HCT116 (cell line): ENCODE measurements at regions of chr7 and their contacts with region 1.

Region 1: DNA sequence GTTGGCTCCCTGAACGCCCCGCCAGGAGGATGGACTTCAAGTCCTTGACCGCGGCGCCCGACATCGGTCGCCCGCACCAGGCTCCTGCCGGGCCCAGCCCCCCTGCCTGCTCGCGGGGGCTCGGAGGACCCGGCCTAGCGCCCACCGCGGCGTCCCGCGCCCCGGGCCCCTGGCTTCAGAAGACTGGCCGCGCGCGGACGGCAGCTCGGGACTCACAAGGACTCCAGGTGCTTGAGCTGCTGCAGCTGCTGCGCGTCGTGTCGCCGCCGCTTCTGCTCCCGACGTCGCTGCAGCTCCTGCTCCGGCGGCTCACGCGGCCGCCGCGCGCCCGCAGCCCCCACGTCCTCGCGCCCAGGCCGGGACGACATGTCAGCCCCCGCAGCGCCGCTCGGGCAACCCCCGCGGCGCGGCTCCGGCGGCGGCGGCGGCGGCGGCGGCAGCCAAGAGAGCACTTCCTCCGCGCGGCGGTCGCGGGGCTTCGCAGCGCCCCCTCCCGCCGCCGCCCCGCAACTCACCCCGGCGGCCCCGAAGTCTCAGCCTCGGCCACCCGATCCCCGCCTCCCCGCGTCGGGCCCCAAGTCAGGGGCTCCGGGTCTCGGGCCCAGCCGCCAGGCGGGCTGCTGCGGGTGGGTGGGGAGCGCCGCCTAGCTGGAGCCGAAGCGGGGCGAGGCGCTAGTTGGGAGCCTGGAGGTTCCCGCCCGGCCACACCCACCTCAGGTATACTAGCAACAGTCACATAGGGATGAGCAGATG is at the start of gene RP9:
- DNase-seq: peak; percentile 57
- ATAC-seq: peak; percentile 87
- H3K4me3 ChIP-seq: peak within 1 kb of the TSS; percentile 79 to 90
- H3K27ac ChIP-seq: peak within 1 kb of the TSS; percentile 91
- H3K4me1 ChIP-seq: peaks cover 4 to 24% of the 10 kb centered on the region in 2 experiments; a peak in 3 of 4 replicates
- H3K27me3 ChIP-seq: no peaks in the 10 kb centered on the region
- CTCF ChIP-seq: peak in 2 of 3 experiments; percentile 39 to 43; a peak in 5 of 6 replicates
- POLR2A ChIP-seq: peak; percentile 59
- RAD21 ChIP-seq: peak; percentile 57
- total RNA-seq, gene RP9: 14.2 TPM

Region 2: DNA sequence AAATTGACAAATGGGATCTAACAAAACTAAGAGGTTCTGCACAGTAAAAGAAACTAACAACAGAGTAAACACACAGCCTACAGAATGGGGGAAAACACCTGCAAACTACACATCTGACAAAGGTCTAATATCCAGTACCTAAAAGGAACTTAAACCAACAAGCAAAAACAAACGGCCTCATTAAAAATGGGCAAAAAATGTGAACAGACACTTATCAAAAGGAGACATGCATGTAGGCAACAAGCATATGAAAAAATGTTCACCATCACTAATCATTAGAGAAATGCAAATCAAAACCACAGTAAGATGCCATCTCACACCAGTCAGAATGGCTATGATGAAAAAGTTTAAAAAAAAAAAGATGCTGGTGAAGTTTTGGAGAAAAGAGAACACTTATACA is 415.0 kb before region 1 on chr7:
- CTCF ChIA-PET with region 1: interaction called, 4 read pairs
- POLR2A ChIA-PET with region 1: no interaction called
- RAD21 ChIA-PET with region 1: no interaction called
- intact Hi-C with region 1: loop called (anchors 5 kb)
- DNase-seq: no peak
- ATAC-seq: no peak
- H3K4me3 ChIP-seq: no peak overlapping the region
- H3K27ac ChIP-seq: no peak overlapping the region
- H3K4me1 ChIP-seq: peaks cover 0 to 8% of the 10 kb centered on the region in 2 experiments; a peak in 1 of 4 replicates
- H3K27me3 ChIP-seq: no peaks in the 10 kb centered on the region
- CTCF ChIP-seq: no peak
- POLR2A ChIP-seq: no peak
- RAD21 ChIP-seq: no peak

Region 3: DNA sequence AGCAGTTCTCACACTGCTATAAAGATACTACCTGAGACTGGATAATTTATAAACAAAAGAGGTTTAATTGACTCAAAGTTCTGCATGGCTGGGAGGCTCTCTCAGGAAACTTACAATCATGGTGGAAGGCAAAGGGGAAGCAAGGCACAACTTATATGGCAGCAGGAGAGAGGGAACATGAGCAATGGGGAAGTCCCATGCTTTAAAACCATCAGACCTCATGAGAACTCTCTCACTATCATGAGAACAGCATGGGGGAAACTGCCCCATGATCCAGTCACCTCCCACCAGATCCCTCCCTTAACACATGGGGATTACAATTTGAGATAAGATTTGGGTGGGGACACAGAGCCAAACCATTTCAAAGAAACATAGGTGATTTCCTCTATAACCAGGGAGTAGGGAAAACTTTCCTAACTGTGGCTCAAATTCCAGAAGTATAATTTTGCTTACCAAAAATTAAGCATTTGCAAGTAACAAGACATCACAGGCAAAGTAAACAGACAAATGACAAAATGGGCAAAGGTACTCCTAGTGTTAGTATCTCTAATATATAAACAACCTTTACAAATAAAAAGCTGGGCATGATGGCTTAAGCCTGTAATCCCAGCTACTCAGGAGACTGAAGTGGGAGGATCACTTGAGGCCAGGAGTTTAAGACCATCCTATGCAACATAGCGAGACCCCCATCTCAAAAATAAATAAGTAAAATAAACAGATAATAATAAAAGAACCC is 305.6 kb before region 1 on chr7:
- CTCF ChIA-PET with region 1: interaction called, 9 read pairs
- POLR2A ChIA-PET with region 1: no interaction called
- RAD21 ChIA-PET with region 1: no interaction called
- intact Hi-C with region 1: loop called (anchors 1 kb)
- DNase-seq: no peak
- ATAC-seq: no peak
- H3K4me3 ChIP-seq: no peak overlapping the region
- H3K27ac ChIP-seq: no peak overlapping the region
- H3K4me1 ChIP-seq: no peaks in the 10 kb centered on the region
- H3K27me3 ChIP-seq: no peaks in the 10 kb centered on the region
- CTCF ChIP-seq: no peak
- POLR2A ChIP-seq: no peak
- RAD21 ChIP-seq: no peak

Region 4: GRCh38 chr7:32891800-32892520 is 217.2 kb before region 1 on chr7:
- CTCF ChIA-PET with region 1: no interaction called
- POLR2A ChIA-PET with region 1: no interaction called
- RAD21 ChIA-PET with region 1: no interaction called
- intact Hi-C with region 1: loop called (anchors 5 kb)
- DNase-seq: peak; percentile 84
- ATAC-seq: peak; percentile 71
- H3K4me3 ChIP-seq: peak overlapping the region; percentile 69 to 88
- H3K27ac ChIP-seq: peak overlapping the region; percentile 89
- H3K4me1 ChIP-seq: peaks cover 16 to 28% of the 10 kb centered on the region in 2 experiments; a peak in 3 of 4 replicates
- H3K27me3 ChIP-seq: no peaks in the 10 kb centered on the region
- CTCF ChIP-seq: no peak
- POLR2A ChIP-seq: peak; percentile 10
- RAD21 ChIP-seq: no peak

Region 5: GRCh38 chr7:33062782-33063443 is 46.3 kb before region 1 on chr7:
- CTCF ChIA-PET with region 1: interaction called, 4 read pairs
- POLR2A ChIA-PET with region 1: no interaction called
- RAD21 ChIA-PET with region 1: no interaction called
- intact Hi-C with region 1: loop called (anchors 5 kb)
- DNase-seq: peak; percentile 93
- ATAC-seq: peak; percentile 95
- H3K4me3 ChIP-seq: peak overlapping the region; percentile 75 to 86
- H3K27ac ChIP-seq: peak overlapping the region; percentile 74
- H3K4me1 ChIP-seq: peaks cover 7 to 17% of the 10 kb centered on the region in 2 experiments; a peak in 3 of 4 replicates
- H3K27me3 ChIP-seq: no peaks in the 10 kb centered on the region
- CTCF ChIP-seq: no peak
- POLR2A ChIP-seq: peak; percentile 76
- RAD21 ChIP-seq: no peak

Region 6: GRCh38 chr7:33091111-33091531 is 18.1 kb before region 1 on chr7:
- CTCF ChIA-PET with region 1: no interaction called
- POLR2A ChIA-PET with region 1: no interaction called
- RAD21 ChIA-PET with region 1: no interaction called
- intact Hi-C with region 1: no loop called
- DNase-seq: no peak
- ATAC-seq: no peak
- H3K4me3 ChIP-seq: no peak overlapping the region
- H3K27ac ChIP-seq: no peak overlapping the region
- H3K4me1 ChIP-seq: no peaks in the 10 kb centered on the region
- H3K27me3 ChIP-seq: no peaks in the 10 kb centered on the region
- CTCF ChIP-seq: no peak
- POLR2A ChIP-seq: no peak
- RAD21 ChIP-seq: no peak

Region 7: DNA sequence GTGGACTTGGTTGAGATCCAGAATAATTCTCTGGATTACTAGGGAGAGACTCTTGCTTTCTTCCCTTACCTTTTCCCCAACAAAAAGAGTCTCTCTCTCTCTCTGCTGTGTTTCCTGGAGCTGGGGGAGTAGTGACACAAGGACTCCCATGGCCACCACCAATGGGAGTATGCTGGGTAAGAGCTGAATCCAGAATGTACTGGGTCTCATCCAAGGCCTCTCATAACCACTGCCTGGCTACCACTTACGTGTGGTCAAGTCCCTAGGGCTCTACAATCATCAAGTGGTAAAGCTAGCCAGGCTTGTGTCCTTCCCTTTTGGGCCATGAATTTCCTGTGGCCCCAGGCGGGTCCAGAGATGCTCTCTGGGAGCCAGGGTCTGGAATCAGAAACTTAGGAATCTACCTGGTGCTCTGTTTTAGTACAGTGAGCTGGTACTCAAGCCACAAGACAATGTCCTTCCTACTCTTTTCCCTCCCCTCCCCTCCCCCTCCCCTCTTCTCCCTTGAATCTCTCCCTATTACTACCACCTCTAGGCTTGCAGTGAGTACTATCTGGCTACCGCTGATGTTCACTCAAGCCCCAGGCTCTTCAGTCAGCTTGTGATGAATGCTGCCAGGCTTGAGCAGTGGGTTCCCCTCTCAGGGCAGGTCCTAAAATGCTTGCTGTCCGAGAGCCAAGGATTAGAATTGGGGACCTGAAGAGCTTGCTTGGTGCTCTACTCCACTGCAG is 216.7 kb after region 1 on chr7:
- CTCF ChIA-PET with region 1: no interaction called
- POLR2A ChIA-PET with region 1: no interaction called
- RAD21 ChIA-PET with region 1: no interaction called
- intact Hi-C with region 1: no loop called
- DNase-seq: no peak
- ATAC-seq: no peak
- H3K4me3 ChIP-seq: no peak overlapping the region
- H3K27ac ChIP-seq: no peak overlapping the region
- H3K4me1 ChIP-seq: no peaks in the 10 kb centered on the region
- H3K27me3 ChIP-seq: no peaks in the 10 kb centered on the region
- CTCF ChIP-seq: no peak
- POLR2A ChIP-seq: no peak
- RAD21 ChIP-seq: no peak